WTC11 (cell line): ENCODE measurements at regions of chr17 and their contacts with region 1.

Region 1: GRCh38 chr17:72556944-72557826 is 436.4 kb downstream of the SOX9 start:
- DNase-seq: peak; percentile 85
- ATAC-seq: peak; percentile 82
- H3K4me3 Mint-ChIP-seq: no peak overlapping the region
- H3K27ac Mint-ChIP-seq: no peak overlapping the region
- H3K4me1 Mint-ChIP-seq: peaks cover 6% of the 10 kb centered on the region
- H3K27me3 Mint-ChIP-seq: no peaks in the 10 kb centered on the region
- CTCF ChIP-seq: peak; percentile 88

Region 2: GRCh38 chr17:72587156-72587555 is 30.0 kb after region 1 on chr17:
- CTCF ChIA-PET with region 1: interaction called, 28 read pairs
- POLR2A ChIA-PET with region 1: no interaction called
- DNase-seq: no peak
- ATAC-seq: no peak
- H3K4me3 Mint-ChIP-seq: no peak overlapping the region
- H3K27ac Mint-ChIP-seq: no peak overlapping the region
- H3K4me1 Mint-ChIP-seq: peaks cover 37% of the 10 kb centered on the region
- H3K27me3 Mint-ChIP-seq: peaks cover 42% of the 10 kb centered on the region
- CTCF ChIP-seq: no peak

Region 3: GRCh38 chr17:72646176-72646575 is 89.0 kb after region 1 on chr17:
- CTCF ChIA-PET with region 1: interaction called, 19 read pairs
- POLR2A ChIA-PET with region 1: no interaction called
- DNase-seq: no peak
- ATAC-seq: no peak
- H3K4me3 Mint-ChIP-seq: no peak overlapping the region
- H3K27ac Mint-ChIP-seq: no peak overlapping the region
- H3K4me1 Mint-ChIP-seq: no peaks in the 10 kb centered on the region
- H3K27me3 Mint-ChIP-seq: no peaks in the 10 kb centered on the region
- CTCF ChIP-seq: no peak

Region 4: DNA sequence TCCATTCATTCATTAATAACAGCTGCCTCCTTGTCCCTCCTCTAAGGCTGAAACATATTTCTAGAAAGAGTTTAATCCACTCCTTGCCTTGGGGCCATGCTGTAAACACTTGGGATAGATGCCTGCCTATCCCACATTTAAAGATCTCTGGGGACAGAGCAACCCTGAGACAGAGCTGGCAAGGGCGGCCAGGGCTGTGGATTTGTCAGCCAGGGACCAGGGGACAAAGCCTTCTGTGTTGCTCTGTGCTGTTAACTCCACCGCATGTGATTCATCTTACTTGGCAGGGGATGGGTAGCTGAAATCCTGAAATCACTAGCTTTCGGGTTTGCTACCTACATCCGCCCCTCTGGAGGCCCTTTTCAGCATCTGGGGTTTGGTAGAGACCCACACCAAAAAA is 142.4 kb after region 1 on chr17:
- CTCF ChIA-PET with region 1: interaction called, 35 read pairs
- POLR2A ChIA-PET with region 1: no interaction called
- DNase-seq: no peak
- ATAC-seq: no peak
- H3K4me3 Mint-ChIP-seq: no peak overlapping the region
- H3K27ac Mint-ChIP-seq: no peak overlapping the region
- H3K4me1 Mint-ChIP-seq: no peaks in the 10 kb centered on the region
- H3K27me3 Mint-ChIP-seq: no peaks in the 10 kb centered on the region; the same call in 1 of the 2 replicates
- CTCF ChIP-seq: no peak

Region 5: DNA sequence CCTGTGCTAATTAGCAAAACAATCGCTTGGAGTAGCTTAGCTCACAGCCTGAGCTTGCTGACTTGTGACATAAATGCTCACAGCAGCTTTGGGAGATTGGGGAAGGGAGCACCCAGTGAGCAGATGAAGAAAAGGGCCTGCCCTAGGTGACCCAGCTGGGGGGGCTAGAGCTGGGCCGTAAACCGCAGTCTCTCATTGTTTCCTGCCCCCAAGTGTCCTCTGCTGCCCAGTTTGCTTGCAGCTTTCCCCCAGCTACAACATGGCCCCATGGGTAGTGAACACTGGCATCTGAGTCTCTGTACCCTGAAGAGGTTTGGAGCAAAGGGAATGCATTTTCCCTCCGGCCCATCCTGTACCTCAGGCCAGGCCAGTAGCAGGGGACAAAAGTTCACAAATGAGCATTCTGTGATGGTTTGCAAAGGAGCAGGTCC is 185.9 kb after region 1 on chr17:
- CTCF ChIA-PET with region 1: interaction called, 12 read pairs
- POLR2A ChIA-PET with region 1: no interaction called
- DNase-seq: no peak
- ATAC-seq: peak; percentile 88
- H3K4me3 Mint-ChIP-seq: no peak overlapping the region
- H3K27ac Mint-ChIP-seq: peak overlapping the region; percentile 38; the same call in 1 of the 2 replicates
- H3K4me1 Mint-ChIP-seq: peaks cover 20% of the 10 kb centered on the region
- H3K27me3 Mint-ChIP-seq: no peaks in the 10 kb centered on the region
- CTCF ChIP-seq: no peak

Region 6: GRCh38 chr17:73192894-73193701 is 635.9 kb after region 1 on chr17 and contains the start of gene COG1:
- CTCF ChIA-PET with region 1: interaction called, 10 read pairs
- POLR2A ChIA-PET with region 1: no interaction called
- DNase-seq: peak; percentile 82
- ATAC-seq: peak; percentile 65
- H3K4me3 Mint-ChIP-seq: peak within 1 kb of the TSS; percentile 96
- H3K27ac Mint-ChIP-seq: peak within 1 kb of the TSS; percentile 97
- H3K4me1 Mint-ChIP-seq: peaks cover 21% of the 10 kb centered on the region
- H3K27me3 Mint-ChIP-seq: no peaks in the 10 kb centered on the region
- CTCF ChIP-seq: no peak
- total RNA-seq, gene COG1: 19.2 to 22.6 TPM (median 19.5 TPM) in 3 replicates